Dorsolateral prefrontal cortex (tissue), 120 donors: ENCODE measurements at regions of chr2 and their contacts with region 1.

Region 1: DNA sequence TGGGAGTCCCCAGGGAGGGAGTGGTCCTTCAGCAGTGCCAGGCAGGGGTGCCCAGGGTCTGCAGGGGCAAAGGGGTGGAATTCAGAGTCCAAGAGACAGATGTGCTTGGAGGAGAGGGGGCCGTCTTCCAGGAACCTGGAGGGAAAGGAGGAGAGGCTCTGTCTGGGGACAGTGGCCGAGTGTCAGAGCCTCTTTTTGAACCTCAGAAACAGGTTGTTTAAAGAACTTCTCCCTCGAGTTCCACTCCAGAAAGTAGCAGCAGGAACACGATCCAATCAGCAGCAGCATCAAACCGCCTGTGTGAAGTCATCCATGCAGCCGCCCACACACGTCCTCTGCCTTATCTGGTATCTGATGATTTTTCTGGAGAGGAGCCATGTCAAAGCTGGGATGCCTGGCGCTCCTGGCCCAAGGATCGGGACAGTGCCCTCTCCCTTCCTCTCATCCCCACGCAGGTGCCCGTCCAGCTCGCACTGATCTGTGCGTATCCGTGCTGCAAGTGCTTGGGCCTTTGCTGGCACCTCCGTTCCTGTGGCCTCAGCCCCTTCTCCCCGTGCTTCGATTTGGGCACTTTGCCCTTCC is 205.1 kb downstream of the NDUFA10 start:
- DNase-seq: peak in 4 of 10 donors; percentile 11 to 41 (median 32)
- H3K4me3 ChIP-seq: no peak overlapping the region
- H3K27ac ChIP-seq: no peak overlapping the region
- H3K27me3 ChIP-seq: no peaks in the 10 kb centered on the region
- CTCF ChIP-seq: no peak

Region 2: DNA sequence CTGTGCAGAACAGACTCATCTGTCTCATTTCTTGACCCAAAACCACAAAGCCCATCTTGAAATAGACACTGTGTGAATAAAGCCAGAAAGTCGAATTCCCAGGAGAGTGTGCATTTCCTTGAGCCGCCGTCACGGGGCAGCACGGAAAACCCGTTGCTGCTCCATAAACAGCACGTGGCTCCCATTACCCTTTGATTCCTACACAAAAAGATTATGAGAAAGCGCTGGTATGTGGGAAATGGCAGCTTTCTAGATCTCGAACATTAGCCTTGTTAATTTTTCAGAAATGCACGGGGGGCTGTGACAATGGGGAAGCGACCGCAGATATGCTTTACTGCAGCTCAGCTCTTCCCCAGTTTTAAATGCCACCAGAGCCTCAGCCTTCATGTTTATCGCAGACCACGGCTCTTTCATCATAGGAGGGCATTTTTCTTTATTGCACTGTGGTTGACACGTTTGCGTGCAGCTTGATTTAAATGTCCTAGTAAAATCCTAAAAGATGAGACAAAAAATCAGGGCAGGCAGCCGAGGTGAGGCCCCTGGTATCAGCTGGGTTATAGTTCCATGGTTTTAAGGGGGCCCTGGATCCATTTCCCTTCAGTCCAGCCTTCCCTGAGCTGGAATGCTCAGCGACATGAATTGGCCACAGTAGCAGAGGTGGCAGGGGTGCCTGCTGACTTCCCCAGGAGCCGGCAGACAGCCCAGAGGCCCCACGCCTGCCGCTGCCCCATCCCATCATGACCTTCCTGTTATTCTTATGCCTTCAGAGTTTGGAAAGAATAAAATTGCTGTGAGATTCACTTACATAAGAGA is 44.2 kb before region 1 on chr2:
- intact Hi-C with region 1: no loop called
- DNase-seq: peak in 3 of 10 donors; percentile 2 to 12 (median 9)
- H3K4me3 ChIP-seq: no peak overlapping the region
- H3K27ac ChIP-seq: no peak overlapping the region
- H3K27me3 ChIP-seq: peaks cover 0 to 6% (median 0%) of the 10 kb centered on the region in 45 donors
- CTCF ChIP-seq: no peak

Region 3: DNA sequence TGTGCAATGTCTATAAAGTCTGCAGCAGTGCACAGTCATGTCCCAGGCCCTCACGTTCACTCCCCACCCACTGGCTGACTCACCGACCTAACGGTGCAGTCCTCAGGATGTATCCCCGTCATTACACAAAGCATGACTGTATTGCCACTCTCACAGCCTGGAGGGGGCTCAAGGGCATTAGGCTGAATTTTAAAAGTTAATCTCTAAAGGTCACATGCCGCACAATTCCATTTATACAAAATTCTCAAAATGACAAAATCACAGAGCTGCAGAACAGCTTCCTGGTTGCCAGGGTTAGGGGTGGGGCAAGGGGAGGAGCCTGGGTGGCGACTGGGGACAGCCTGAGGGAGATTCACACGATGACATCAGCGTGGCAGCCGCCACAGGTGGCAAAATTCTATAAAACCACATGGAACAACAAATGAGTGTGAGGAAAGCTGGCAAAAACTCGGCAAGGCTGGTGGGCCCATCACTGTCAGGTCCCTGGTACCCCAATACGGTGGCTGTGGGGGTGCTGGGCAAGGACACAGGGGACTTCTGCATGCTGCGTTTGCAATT is 107.4 kb after region 1 on chr2:
- intact Hi-C with region 1: loop called in 1 of 2 experiments (anchors 2 kb)
- DNase-seq: peak; percentile 1 to 63 (median 44)
- H3K4me3 ChIP-seq: peak overlapping the region in 46 of 59 donors; percentile 8 to 64 (median 46)
- H3K27ac ChIP-seq: peak overlapping the region in 22 of 59 donors; percentile 24 to 93 (median 87)
- H3K27me3 ChIP-seq: no peaks in the 10 kb centered on the region
- CTCF ChIP-seq: peak in 1 of 56 donors; percentile 5